GM12878 (cell line): ENCODE measurements at regions of chr1 and their contacts with region 1.

Region 1: GRCh38 chr1:23854568-23854967 is 13.5 kb downstream of the FUCA1 start:
- DNase-seq: no peak
- ATAC-seq: peak; percentile 68
- H3K4me3 ChIP-seq: no peak overlapping the region
- H3K27ac ChIP-seq: no peak overlapping the region
- H3K4me1 ChIP-seq: no peaks in the 10 kb centered on the region
- H3K27me3 ChIP-seq: no peaks in the 10 kb centered on the region
- CTCF ChIP-seq: peak in 2 of 3 experiments; percentile 20 to 45; a peak in 3 of 6 replicates
- EP300 ChIP-seq: no peak
- POLR2A ChIP-seq: no peak
- RAD21 ChIP-seq: peak; percentile 35

Region 2: GRCh38 chr1:23682946-23683345 is 171.6 kb before region 1 on chr1:
- CTCF ChIA-PET with region 1: no interaction called
- POLR2A ChIA-PET with region 1: no interaction called
- RAD21 ChIA-PET with region 1: no interaction called
- SMC1A ChIA-PET with region 1: no interaction called
- in situ Hi-C with region 1: no loop called
- intact Hi-C with region 1: loop called (anchors 5 kb)
- DNase-seq: no peak
- ATAC-seq: no peak
- H3K4me3 ChIP-seq: no peak overlapping the region
- H3K27ac ChIP-seq: no peak overlapping the region
- H3K4me1 ChIP-seq: no peaks in the 10 kb centered on the region
- H3K27me3 ChIP-seq: no peaks in the 10 kb centered on the region; a peak in 2 of 4 replicates
- CTCF ChIP-seq: no peak
- EP300 ChIP-seq: no peak
- POLR2A ChIP-seq: no peak
- RAD21 ChIP-seq: no peak

Region 3: DNA sequence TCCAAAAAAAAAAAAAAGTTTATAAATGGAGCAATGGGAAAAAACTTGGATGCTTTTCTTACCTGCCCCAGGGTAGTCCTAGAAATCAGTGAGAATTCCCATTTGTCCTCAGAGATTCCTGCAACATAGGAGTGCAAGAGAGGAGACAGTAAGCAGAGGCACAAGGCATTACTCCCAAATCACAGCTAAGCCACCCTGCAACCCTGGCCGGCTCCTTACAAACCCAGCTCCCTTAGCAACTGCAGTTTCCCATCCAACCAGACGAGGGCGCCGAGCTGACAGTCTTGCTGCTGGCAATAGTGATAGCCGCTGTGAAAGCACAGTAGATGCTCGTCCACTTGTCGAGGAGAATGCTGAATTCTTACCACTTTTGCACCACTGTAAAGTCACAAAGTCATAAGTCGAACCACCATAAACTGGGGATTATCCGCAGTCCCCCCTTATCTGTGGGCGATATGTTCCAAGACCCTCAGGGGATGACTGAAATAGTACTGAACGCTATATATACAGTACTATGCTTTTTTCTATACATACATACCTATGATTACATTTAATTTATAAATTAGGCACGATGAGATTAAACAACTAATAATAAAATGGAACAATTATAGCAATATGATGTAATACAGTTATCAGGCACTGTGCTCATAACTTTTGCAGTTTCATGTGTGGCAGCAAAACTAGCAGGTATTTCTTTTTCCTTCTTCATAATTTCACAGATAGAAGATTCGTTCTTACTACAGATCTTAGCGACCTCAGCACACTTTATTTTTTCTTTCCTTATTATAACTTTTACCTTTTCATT is 82.3 kb before region 1 on chr1:
- CTCF ChIA-PET with region 1: interaction called, 20 read pairs
- POLR2A ChIA-PET with region 1: no interaction called
- RAD21 ChIA-PET with region 1: interaction called, 9 read pairs
- SMC1A ChIA-PET with region 1: interaction called, 8 read pairs
- in situ Hi-C with region 1: no loop called
- intact Hi-C with region 1: no loop called
- DNase-seq: peak; percentile 27
- ATAC-seq: peak; percentile 99
- H3K4me3 ChIP-seq: no peak overlapping the region
- H3K27ac ChIP-seq: no peak overlapping the region
- H3K4me1 ChIP-seq: peaks cover 12% of the 10 kb centered on the region
- H3K27me3 ChIP-seq: no peaks in the 10 kb centered on the region
- CTCF ChIP-seq: peak; percentile 97 to 98 (median 98); a peak in 5 of 6 replicates
- EP300 ChIP-seq: no peak
- POLR2A ChIP-seq: no peak
- RAD21 ChIP-seq: peak; percentile 91

Region 4: DNA sequence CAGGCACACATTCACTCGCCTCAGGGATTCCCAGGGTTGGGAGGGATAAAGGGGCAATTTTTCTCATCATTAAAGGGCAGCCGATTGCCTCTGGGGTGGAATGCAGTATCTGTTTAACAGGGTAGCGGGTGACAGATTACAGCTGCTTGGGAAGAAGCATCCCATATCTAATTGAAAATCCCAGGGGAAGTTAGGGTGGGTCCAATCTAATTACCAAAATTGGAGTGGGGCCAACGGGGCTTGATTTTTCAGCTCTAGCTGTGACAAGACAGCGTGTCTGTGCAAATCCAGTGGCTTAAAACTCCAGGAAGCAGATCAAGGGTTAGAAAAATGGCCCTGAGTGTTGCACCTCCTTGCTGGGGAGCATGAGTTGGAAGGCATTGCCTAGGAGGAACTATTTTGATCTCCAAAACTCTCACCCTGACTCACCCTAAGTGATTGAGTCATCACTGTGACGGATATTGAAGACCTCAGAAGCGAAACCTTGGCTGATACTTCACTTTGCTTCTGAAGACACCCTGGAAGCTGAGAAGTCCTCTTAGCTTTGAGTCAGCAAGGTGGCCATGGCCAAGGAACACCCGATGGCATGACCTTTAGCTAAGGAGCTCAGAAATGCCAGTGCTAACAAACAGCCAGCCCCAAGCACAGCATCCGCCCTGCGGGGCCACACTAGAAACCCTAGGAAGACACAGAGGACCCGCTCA is 510.6 kb after region 1 on chr1:
- CTCF ChIA-PET with region 1: no interaction called
- POLR2A ChIA-PET with region 1: no interaction called
- RAD21 ChIA-PET with region 1: no interaction called
- SMC1A ChIA-PET with region 1: no interaction called
- in situ Hi-C with region 1: no loop called
- intact Hi-C with region 1: no loop called
- DNase-seq: peak; percentile 33
- ATAC-seq: peak; percentile 67
- H3K4me3 ChIP-seq: no peak overlapping the region
- H3K27ac ChIP-seq: no peak overlapping the region
- H3K4me1 ChIP-seq: peaks cover 11% of the 10 kb centered on the region; the same call in 1 of the 2 replicates
- H3K27me3 ChIP-seq: no peaks in the 10 kb centered on the region
- CTCF ChIP-seq: no peak
- EP300 ChIP-seq: no peak
- POLR2A ChIP-seq: no peak
- RAD21 ChIP-seq: no peak